GM12878 (cell line): ENCODE measurements at regions of chr10 and their contacts with region 1.

Region 1: DNA sequence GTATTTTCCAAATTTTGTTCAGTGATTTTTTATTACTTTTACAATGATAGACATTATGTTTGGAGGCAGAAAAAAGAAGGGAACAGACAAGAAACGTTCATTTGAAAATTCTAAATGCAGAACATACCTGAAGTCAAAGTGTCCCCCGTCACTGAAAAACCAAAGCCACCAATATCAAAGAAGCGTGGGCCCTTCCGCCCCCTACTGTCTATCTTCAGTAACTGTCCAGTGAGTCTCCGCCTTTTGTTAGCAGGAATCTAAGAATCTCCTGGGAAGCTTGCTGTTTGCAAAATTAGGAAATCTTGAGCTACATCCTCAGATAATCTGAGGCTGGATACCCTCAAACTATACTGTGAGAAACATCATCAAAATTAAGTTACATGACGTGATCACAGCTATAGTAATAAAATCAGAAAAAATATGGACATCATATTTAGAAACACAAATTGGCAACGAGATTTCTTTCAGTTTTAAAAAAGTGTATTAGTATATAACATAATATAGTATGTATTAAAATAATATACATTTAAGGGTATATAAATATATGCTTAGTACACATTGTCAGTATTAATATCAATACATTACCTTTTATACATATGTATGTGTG is 169.3 kb upstream of the AKR1E2 start:
- DNase-seq: no peak
- ATAC-seq: peak; percentile 47; the same call in 1 of the 3 replicates
- H3K4me3 ChIP-seq: no peak overlapping the region
- H3K27ac ChIP-seq: no peak overlapping the region
- H3K4me1 ChIP-seq: no peaks in the 10 kb centered on the region
- H3K27me3 ChIP-seq: no peaks in the 10 kb centered on the region
- CTCF ChIP-seq: peak; percentile 74 to 79 (median 77)
- EP300 ChIP-seq: no peak
- POLR2A ChIP-seq: no peak
- RAD21 ChIP-seq: peak; percentile 95

Region 2: DNA sequence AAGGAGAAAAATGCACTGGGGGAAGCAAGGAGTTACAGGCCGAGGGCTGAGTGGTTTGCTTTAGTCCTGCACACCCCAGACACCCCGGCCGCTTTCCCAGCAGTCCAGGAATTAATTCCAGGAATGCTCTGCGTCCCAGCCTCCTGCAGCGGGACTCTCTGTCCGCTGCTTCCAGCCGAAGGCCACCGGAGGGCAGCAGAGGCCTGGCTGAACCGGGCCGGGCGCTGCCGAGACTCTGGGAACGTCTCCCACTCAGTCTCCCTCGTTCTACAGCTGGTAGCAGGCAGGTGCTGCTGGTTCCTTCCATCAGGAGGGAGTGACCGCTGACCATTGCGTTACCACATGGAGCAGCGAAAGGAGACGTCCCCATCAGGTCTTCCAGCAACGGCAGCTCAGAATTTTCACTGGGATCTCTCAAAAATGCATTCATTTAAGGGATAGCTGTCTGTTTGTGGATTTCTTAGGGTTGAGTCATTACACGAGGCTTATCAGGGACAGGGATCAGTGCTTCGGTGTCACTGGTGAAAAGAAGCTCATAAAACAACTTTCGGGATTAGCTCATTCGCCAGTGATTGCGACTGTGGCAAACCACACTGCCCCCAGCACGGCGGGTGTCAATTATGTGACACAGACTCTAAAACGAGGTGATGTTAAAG is 1459.2 kb before region 1 on chr10:
- CTCF ChIA-PET with region 1: interaction called, 13 read pairs
- POLR2A ChIA-PET with region 1: no interaction called
- RAD21 ChIA-PET with region 1: no interaction called
- SMC1A ChIA-PET with region 1: interaction called, 3 read pairs
- in situ Hi-C with region 1: loop called (anchors 10 kb)
- intact Hi-C with region 1: loop called (anchors 1 kb)
- DNase-seq: peak; percentile 24
- ATAC-seq: peak; percentile 90
- H3K4me3 ChIP-seq: no peak overlapping the region
- H3K27ac ChIP-seq: no peak overlapping the region
- H3K4me1 ChIP-seq: no peaks in the 10 kb centered on the region
- H3K27me3 ChIP-seq: peaks cover 1 to 12% of the 10 kb centered on the region in 2 experiments; a peak in 3 of 4 replicates
- CTCF ChIP-seq: peak; percentile 68 to 77 (median 73)
- EP300 ChIP-seq: peak in 1 of 2 experiments; percentile 37; a peak in 2 of 4 replicates
- POLR2A ChIP-seq: no peak
- RAD21 ChIP-seq: peak; percentile 66

Region 3: DNA sequence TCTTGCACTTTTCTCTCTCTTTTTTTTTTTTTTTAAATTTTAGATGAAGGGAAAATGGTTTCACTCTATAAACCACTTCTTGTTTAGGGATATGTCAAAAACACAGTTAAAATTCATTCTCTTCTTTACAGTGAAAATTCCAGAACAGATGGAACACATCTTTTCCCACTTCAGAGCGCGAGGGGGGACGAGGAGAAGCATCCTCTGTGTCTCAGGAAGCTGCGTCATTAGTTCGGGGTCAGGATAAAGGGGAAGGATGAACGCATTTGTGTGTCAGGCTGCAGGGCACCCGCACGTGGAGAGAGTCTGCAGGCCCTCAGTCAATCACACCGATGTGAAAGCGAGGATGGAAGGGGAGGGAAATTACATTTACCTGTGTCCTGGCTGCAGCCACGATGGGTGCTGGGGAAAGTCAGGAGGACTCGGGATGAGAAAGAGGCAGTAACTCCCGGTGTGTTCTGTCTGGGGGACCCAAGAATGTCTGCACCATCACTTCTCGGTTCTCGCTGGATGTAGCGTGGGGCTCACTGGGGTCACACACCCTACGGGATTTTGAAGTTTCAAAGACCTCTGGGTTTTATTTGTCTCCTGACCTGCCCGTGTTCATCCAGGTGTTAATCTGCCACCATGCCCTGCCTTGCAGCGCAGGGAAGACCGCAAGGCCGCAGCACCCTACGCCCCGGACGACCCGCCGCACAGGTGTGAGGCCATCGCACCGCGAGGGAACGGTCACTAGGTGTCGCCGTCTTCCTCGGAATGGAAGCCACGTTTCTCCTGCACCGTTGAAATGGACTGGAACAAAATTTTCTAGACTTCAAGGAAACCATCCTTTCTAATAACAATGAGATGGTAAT is 1417.4 kb before region 1 on chr10:
- CTCF ChIA-PET with region 1: interaction called, 15 read pairs
- POLR2A ChIA-PET with region 1: no interaction called
- RAD21 ChIA-PET with region 1: interaction called, 6 read pairs
- SMC1A ChIA-PET with region 1: no interaction called
- in situ Hi-C with region 1: loop called (anchors 10 kb)
- intact Hi-C with region 1: loop called (anchors 1 kb)
- DNase-seq: no peak
- ATAC-seq: peak; percentile 96
- H3K4me3 ChIP-seq: no peak overlapping the region
- H3K27ac ChIP-seq: no peak overlapping the region
- H3K4me1 ChIP-seq: no peaks in the 10 kb centered on the region
- H3K27me3 ChIP-seq: peaks cover 1 to 3% of the 10 kb centered on the region in 2 experiments; a peak in 1 of 4 replicates
- CTCF ChIP-seq: peak; percentile 86 to 93 (median 91)
- EP300 ChIP-seq: no peak
- POLR2A ChIP-seq: no peak
- RAD21 ChIP-seq: peak; percentile 97

Region 4: GRCh38 chr10:3398825-3399646 is 1257.6 kb before region 1 on chr10:
- CTCF ChIA-PET with region 1: no interaction called
- POLR2A ChIA-PET with region 1: no interaction called
- RAD21 ChIA-PET with region 1: no interaction called
- SMC1A ChIA-PET with region 1: no interaction called
- in situ Hi-C with region 1: no loop called
- intact Hi-C with region 1: loop called (anchors 10 kb)
- DNase-seq: no peak
- ATAC-seq: no peak
- H3K4me3 ChIP-seq: no peak overlapping the region
- H3K27ac ChIP-seq: no peak overlapping the region
- H3K4me1 ChIP-seq: no peaks in the 10 kb centered on the region
- H3K27me3 ChIP-seq: no peaks in the 10 kb centered on the region
- CTCF ChIP-seq: no peak
- EP300 ChIP-seq: no peak
- POLR2A ChIP-seq: no peak
- RAD21 ChIP-seq: no peak

Region 5: GRCh38 chr10:3735175-3735574 is 921.5 kb before region 1 on chr10:
- CTCF ChIA-PET with region 1: interaction called, 3 read pairs
- POLR2A ChIA-PET with region 1: no interaction called
- RAD21 ChIA-PET with region 1: interaction called, 3 read pairs
- SMC1A ChIA-PET with region 1: no interaction called
- in situ Hi-C with region 1: no loop called
- intact Hi-C with region 1: loop called (anchors 10 kb)
- DNase-seq: no peak
- ATAC-seq: peak; percentile 67
- H3K4me3 ChIP-seq: no peak overlapping the region
- H3K27ac ChIP-seq: no peak overlapping the region
- H3K4me1 ChIP-seq: no peaks in the 10 kb centered on the region
- H3K27me3 ChIP-seq: no peaks in the 10 kb centered on the region
- CTCF ChIP-seq: peak; percentile 23 to 55 (median 53); a peak in 4 of 6 replicates
- EP300 ChIP-seq: no peak
- POLR2A ChIP-seq: no peak
- RAD21 ChIP-seq: peak; percentile 49

Region 6: GRCh38 chr10:4671451-4672145 is 14.9 kb after region 1 on chr10:
- CTCF ChIA-PET with region 1: interaction called, 10 read pairs
- POLR2A ChIA-PET with region 1: no interaction called
- RAD21 ChIA-PET with region 1: no interaction called
- SMC1A ChIA-PET with region 1: interaction called, 4 read pairs
- in situ Hi-C with region 1: no loop called
- intact Hi-C with region 1: no loop called
- DNase-seq: no peak
- ATAC-seq: no peak
- H3K4me3 ChIP-seq: no peak overlapping the region
- H3K27ac ChIP-seq: no peak overlapping the region
- H3K4me1 ChIP-seq: no peaks in the 10 kb centered on the region
- H3K27me3 ChIP-seq: no peaks in the 10 kb centered on the region
- CTCF ChIP-seq: no peak
- EP300 ChIP-seq: no peak
- POLR2A ChIP-seq: no peak
- RAD21 ChIP-seq: no peak